CD8-positive, alpha-beta T cell (primary cell): ENCODE measurements at regions of chr9 and their contacts with region 1.

Region 1: GRCh38 chr9:87324613-87325194 is 173.0 kb upstream of the DAPK1 start:
- DNase-seq: peak in 2 of 9 experiments; percentile 57 to 68
- ATAC-seq: peak; percentile 42
- H3K4me3 ChIP-seq: no peak overlapping the region
- H3K4me3 Mint-ChIP-seq: no peak overlapping the region
- H3K27ac ChIP-seq: no peak overlapping the region
- H3K27ac Mint-ChIP-seq: no peak overlapping the region
- H3K4me1 ChIP-seq: no peaks in the 10 kb centered on the region
- H3K4me1 Mint-ChIP-seq: no peaks in the 10 kb centered on the region
- H3K27me3 ChIP-seq: no peaks in the 10 kb centered on the region
- H3K27me3 Mint-ChIP-seq: peaks cover 13% of the 10 kb centered on the region
- CTCF ChIP-seq: peak; percentile 94

Region 2: GRCh38 chr9:86202338-86202882 is 1122.3 kb before region 1 on chr9:
- CTCF ChIA-PET with region 1: interaction called, 5 read pairs
- POLR2A ChIA-PET with region 1: no interaction called
- intact Hi-C with region 1: loop called in 1 of 2 experiments (anchors 1 kb)
- DNase-seq: peak in 4 of 9 experiments; percentile 17 to 63 (median 33)
- ATAC-seq: peak; percentile 46
- H3K4me3 ChIP-seq: no peak overlapping the region
- H3K4me3 Mint-ChIP-seq: no peak overlapping the region
- H3K27ac ChIP-seq: no peak overlapping the region
- H3K27ac Mint-ChIP-seq: no peak overlapping the region
- H3K4me1 ChIP-seq: no peaks in the 10 kb centered on the region
- H3K4me1 Mint-ChIP-seq: no peaks in the 10 kb centered on the region
- H3K27me3 ChIP-seq: no peaks in the 10 kb centered on the region
- H3K27me3 Mint-ChIP-seq: peaks cover 2% of the 10 kb centered on the region
- CTCF ChIP-seq: peak; percentile 81

Region 3: GRCh38 chr9:86413966-86414880 is 910.5 kb before region 1 on chr9:
- CTCF ChIA-PET with region 1: interaction called, 17 read pairs
- POLR2A ChIA-PET with region 1: no interaction called
- intact Hi-C with region 1: loop called (anchors 1 to 2 kb)
- DNase-seq: peak in 2 of 9 experiments; percentile 25 to 37
- ATAC-seq: no peak
- H3K4me3 ChIP-seq: no peak overlapping the region
- H3K4me3 Mint-ChIP-seq: no peak overlapping the region
- H3K27ac ChIP-seq: no peak overlapping the region
- H3K27ac Mint-ChIP-seq: no peak overlapping the region
- H3K4me1 ChIP-seq: no peaks in the 10 kb centered on the region
- H3K4me1 Mint-ChIP-seq: no peaks in the 10 kb centered on the region
- H3K27me3 ChIP-seq: peaks cover 0 to 3% of the 10 kb centered on the region in 2 experiments
- H3K27me3 Mint-ChIP-seq: peaks cover 13% of the 10 kb centered on the region
- CTCF ChIP-seq: peak; percentile 87

Region 4: GRCh38 chr9:86434039-86434726 is 890.5 kb before region 1 on chr9:
- CTCF ChIA-PET with region 1: interaction called, 13 read pairs
- POLR2A ChIA-PET with region 1: no interaction called
- intact Hi-C with region 1: loop called in 1 of 2 experiments (anchors 1 kb)
- DNase-seq: peak in 2 of 9 experiments; percentile 37 to 53
- ATAC-seq: no peak
- H3K4me3 ChIP-seq: no peak overlapping the region
- H3K4me3 Mint-ChIP-seq: no peak overlapping the region
- H3K27ac ChIP-seq: no peak overlapping the region
- H3K27ac Mint-ChIP-seq: no peak overlapping the region
- H3K4me1 ChIP-seq: no peaks in the 10 kb centered on the region
- H3K4me1 Mint-ChIP-seq: no peaks in the 10 kb centered on the region
- H3K27me3 ChIP-seq: no peaks in the 10 kb centered on the region
- H3K27me3 Mint-ChIP-seq: peaks cover 31% of the 10 kb centered on the region
- CTCF ChIP-seq: peak; percentile 56

Region 5: DNA sequence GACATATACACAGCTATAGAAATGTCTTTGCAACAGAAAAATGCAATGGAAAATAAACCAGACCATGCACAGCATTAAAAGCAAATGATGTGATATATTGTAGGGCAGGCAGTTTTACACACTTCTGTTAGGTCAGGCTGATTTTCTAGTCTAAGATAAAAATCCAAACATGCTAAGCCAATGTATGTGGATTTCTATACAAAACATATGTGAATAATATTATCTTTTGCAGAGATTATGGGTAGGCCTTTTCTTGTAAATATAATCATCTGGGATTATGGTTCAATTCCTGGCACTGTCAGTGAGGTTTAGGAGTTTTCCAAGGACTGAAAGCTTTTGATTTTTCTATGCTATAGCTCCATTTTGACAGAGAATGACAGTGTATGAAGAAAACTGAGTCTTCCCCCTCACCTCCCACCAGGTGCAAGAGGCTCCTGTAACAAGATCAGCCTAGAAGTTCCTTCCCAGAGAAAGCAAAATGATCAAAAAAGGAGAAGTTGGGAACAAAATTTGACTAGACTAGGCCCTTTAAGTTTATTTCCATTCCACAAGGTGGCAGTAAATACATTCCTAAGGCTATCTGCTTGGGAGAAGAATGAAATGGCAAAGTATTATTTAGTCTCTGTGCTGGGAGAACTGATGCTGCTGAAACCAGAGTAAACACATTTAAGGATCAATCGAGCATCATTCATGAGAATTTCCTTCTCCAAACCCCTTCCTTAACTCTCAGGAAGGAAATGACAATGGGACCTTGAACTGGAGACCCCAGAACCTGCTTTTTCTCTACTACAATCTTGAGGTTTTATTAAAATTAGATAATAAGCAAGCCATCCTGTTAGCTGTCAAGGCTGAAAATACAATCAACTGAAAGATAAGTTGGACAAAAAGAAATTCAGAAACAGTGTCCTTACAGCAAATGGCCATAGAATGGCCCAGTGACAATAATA is 837.5 kb before region 1 on chr9:
- CTCF ChIA-PET with region 1: interaction called, 27 read pairs
- POLR2A ChIA-PET with region 1: no interaction called
- intact Hi-C with region 1: loop called in 1 of 2 experiments (anchors 1 kb)
- DNase-seq: peak in 2 of 9 experiments; percentile 11 to 32
- ATAC-seq: no peak
- H3K4me3 ChIP-seq: no peak overlapping the region
- H3K4me3 Mint-ChIP-seq: no peak overlapping the region
- H3K27ac ChIP-seq: no peak overlapping the region
- H3K27ac Mint-ChIP-seq: no peak overlapping the region
- H3K4me1 ChIP-seq: no peaks in the 10 kb centered on the region
- H3K4me1 Mint-ChIP-seq: peaks cover 7% of the 10 kb centered on the region
- H3K27me3 ChIP-seq: no peaks in the 10 kb centered on the region
- H3K27me3 Mint-ChIP-seq: no peaks in the 10 kb centered on the region
- CTCF ChIP-seq: peak; percentile 38

Region 6: DNA sequence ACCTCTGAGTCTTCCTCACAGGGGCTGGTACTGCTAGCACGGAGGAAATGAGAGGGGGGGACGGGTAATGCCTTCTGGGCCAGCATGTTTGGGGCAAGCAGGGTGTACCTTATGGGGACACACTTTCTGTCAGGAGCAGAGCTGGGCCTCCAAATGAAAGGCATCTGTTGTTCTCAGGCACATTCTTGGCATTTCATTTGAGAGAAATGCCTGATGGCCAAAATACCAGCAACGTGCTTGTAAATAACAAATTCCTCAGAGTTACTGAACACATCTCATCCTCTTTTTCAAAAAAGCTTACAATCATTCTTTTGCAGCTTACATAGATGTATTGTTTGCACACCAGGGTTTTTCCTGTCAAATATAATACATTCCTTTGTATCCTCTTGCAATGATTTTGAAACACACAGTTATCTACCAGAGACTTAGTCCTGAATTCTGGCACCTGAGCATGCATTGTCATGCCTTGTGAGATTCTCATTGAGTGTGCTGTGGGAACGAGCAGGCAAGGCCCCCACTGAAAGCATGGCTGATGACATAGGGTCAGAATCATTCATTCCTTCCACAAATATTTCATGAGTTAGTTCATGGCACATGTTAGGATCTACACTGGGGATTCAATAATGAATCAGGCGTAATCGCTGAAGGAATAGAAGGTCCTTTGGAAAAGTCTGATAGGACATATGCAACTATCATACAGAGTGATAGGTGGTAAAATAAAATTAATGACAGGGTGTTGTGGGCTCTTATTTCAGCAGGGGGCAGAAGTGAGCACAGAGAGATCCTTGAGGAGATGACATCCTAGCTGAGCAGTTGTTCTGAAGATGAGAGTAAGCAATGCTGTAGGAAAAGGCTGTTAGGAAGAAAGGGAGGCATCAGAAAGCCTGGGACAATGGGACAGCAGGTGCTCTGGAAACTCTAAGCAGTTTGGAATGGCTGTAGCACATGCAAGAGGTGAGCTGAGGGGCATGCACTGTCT is 709.5 kb before region 1 on chr9:
- CTCF ChIA-PET with region 1: no interaction called
- POLR2A ChIA-PET with region 1: no interaction called
- intact Hi-C with region 1: loop called in 1 of 2 experiments (anchors 10 kb)
- DNase-seq: peak in 2 of 9 experiments; percentile 9 to 14
- ATAC-seq: no peak
- H3K4me3 ChIP-seq: no peak overlapping the region
- H3K4me3 Mint-ChIP-seq: no peak overlapping the region
- H3K27ac ChIP-seq: no peak overlapping the region
- H3K27ac Mint-ChIP-seq: no peak overlapping the region
- H3K4me1 ChIP-seq: no peaks in the 10 kb centered on the region
- H3K4me1 Mint-ChIP-seq: no peaks in the 10 kb centered on the region
- H3K27me3 ChIP-seq: no peaks in the 10 kb centered on the region
- H3K27me3 Mint-ChIP-seq: peaks cover 6% of the 10 kb centered on the region
- CTCF ChIP-seq: no peak

Region 7: DNA sequence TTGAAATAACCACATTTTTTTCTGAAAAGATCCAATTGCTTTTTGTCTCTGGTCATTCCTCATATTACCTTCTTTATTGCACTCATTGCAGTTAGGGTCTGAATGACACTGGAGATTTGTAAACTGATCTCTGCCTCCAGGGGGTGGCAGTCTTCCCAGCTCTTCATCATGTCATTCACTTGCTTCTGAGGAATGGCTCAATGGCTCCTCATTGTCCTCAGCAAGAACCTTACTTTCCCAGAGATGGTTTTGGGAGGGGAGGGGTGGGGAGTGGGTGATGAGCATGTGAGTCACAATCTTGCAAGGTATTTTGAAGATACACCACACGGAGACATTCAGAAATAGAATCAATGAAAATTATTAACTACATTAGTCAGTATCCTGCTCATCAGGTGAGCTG is 217.6 kb before region 1 on chr9:
- CTCF ChIA-PET with region 1: interaction called, 3 read pairs
- POLR2A ChIA-PET with region 1: no interaction called
- intact Hi-C with region 1: loop called in 1 of 2 experiments (anchors 10 kb)
- DNase-seq: peak in 2 of 9 experiments; percentile 14 to 15
- ATAC-seq: no peak
- H3K4me3 ChIP-seq: no peak overlapping the region
- H3K4me3 Mint-ChIP-seq: no peak overlapping the region
- H3K27ac ChIP-seq: no peak overlapping the region
- H3K27ac Mint-ChIP-seq: no peak overlapping the region
- H3K4me1 ChIP-seq: no peaks in the 10 kb centered on the region
- H3K4me1 Mint-ChIP-seq: no peaks in the 10 kb centered on the region
- H3K27me3 ChIP-seq: peaks cover 0 to 2% of the 10 kb centered on the region in 2 experiments
- H3K27me3 Mint-ChIP-seq: peaks cover 20% of the 10 kb centered on the region
- CTCF ChIP-seq: no peak

Region 8: GRCh38 chr9:87267251-87268070 is 57.2 kb before region 1 on chr9:
- CTCF ChIA-PET with region 1: no interaction called
- POLR2A ChIA-PET with region 1: no interaction called
- intact Hi-C with region 1: no loop called
- DNase-seq: no peak
- ATAC-seq: no peak
- H3K4me3 ChIP-seq: no peak overlapping the region
- H3K4me3 Mint-ChIP-seq: no peak overlapping the region
- H3K27ac ChIP-seq: no peak overlapping the region
- H3K27ac Mint-ChIP-seq: no peak overlapping the region
- H3K4me1 ChIP-seq: peaks cover 4% of the 10 kb centered on the region
- H3K4me1 Mint-ChIP-seq: peaks cover 12% of the 10 kb centered on the region
- H3K27me3 ChIP-seq: no peaks in the 10 kb centered on the region
- H3K27me3 Mint-ChIP-seq: peaks cover 23% of the 10 kb centered on the region
- CTCF ChIP-seq: no peak

Region 9: DNA sequence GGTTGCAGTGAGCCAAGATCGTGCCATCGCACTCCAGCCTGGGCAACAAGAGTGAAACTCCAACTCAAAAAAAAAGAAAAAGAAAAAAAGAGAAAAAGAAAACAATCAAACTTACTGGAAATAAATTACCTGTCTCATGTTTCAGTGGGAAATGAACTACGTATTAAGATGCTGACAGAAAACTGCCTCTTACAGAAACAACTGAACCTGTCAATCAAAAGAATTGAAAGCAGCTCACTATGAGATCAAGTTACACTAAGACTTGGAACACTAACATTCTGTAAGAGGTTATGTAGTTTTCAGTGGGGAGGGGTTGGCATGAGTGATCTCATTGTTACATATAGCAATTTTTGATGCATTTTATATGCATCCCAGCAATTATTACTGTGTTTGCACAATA is 493.6 kb after region 1 on chr9:
- CTCF ChIA-PET with region 1: no interaction called
- POLR2A ChIA-PET with region 1: no interaction called
- intact Hi-C with region 1: no loop called
- DNase-seq: no peak
- ATAC-seq: no peak
- H3K4me3 ChIP-seq: no peak overlapping the region
- H3K4me3 Mint-ChIP-seq: no peak overlapping the region
- H3K27ac ChIP-seq: no peak overlapping the region
- H3K27ac Mint-ChIP-seq: no peak overlapping the region
- H3K4me1 ChIP-seq: no peaks in the 10 kb centered on the region
- H3K4me1 Mint-ChIP-seq: no peaks in the 10 kb centered on the region
- H3K27me3 ChIP-seq: no peaks in the 10 kb centered on the region
- H3K27me3 Mint-ChIP-seq: peaks cover 10% of the 10 kb centered on the region
- CTCF ChIP-seq: no peak